A673 (cell line): ENCODE measurements at regions of chr9 and their contacts with region 1.

Region 1: DNA sequence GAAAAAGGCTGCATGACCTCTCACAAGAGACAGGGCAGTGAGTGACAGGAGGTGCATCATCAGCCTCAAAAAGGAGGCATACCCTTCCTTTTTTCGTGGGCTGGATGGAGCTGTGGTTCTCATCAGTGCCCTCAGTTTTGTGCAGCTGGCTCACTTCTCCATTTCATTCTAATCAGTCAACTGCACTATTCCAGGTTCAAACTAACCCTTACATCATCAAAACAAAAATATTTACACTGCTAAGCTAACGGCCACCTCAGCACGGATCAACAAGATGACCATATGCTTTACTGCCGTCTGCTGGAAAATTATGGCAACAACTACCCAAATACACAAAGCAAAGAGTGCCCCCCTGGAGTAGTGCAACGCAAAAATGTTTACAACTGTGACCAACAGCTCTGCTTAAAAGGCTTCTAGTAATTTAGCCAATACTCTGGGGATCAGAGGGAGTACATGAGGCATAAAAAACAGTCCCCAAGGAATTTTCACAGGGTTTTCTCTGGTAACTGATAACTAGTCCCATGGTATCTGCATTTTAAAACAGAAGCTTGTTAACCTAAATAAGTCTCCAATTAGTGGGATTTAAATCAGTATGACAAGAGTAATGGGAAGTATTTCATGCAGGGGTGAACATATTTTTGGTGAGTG is 10.8 kb downstream of the KCNV2 start:
- DNase-seq: peak; percentile 75
- H3K4me3 ChIP-seq: no peak overlapping the region
- H3K27ac ChIP-seq: no peak overlapping the region
- H3K4me1 ChIP-seq: peaks cover 6% of the 10 kb centered on the region
- H3K27me3 ChIP-seq: no peaks in the 10 kb centered on the region
- CTCF ChIP-seq: peak; percentile 75

Region 2: GRCh38 chr9:2132484-2133082 is 595.5 kb before region 1 on chr9:
- CTCF ChIA-PET with region 1: interaction called, 7 read pairs
- POLR2A ChIA-PET with region 1: no interaction called
- intact Hi-C with region 1: loop called (anchors 10 kb)
- DNase-seq: peak; percentile 68
- H3K4me3 ChIP-seq: no peak overlapping the region
- H3K27ac ChIP-seq: no peak overlapping the region
- H3K4me1 ChIP-seq: no peaks in the 10 kb centered on the region
- H3K27me3 ChIP-seq: no peaks in the 10 kb centered on the region
- CTCF ChIP-seq: peak; percentile 80

Region 3: GRCh38 chr9:2228132-2228531 is 500.0 kb before region 1 on chr9:
- CTCF ChIA-PET with region 1: no interaction called
- POLR2A ChIA-PET with region 1: no interaction called
- intact Hi-C with region 1: loop called (anchors 5 kb)
- DNase-seq: peak; percentile 62
- H3K4me3 ChIP-seq: no peak overlapping the region
- H3K27ac ChIP-seq: no peak overlapping the region
- H3K4me1 ChIP-seq: no peaks in the 10 kb centered on the region
- H3K27me3 ChIP-seq: no peaks in the 10 kb centered on the region
- CTCF ChIP-seq: peak; percentile 78

Region 4: GRCh38 chr9:2717385-2717784 is 10.7 kb before region 1 on chr9 and contains the start of gene KCNV2:
- CTCF ChIA-PET with region 1: no interaction called
- POLR2A ChIA-PET with region 1: no interaction called
- intact Hi-C with region 1: no loop called
- DNase-seq: no peak
- H3K4me3 ChIP-seq: no peak within 1 kb of the TSS
- H3K27ac ChIP-seq: no peak within 1 kb of the TSS
- H3K4me1 ChIP-seq: no peaks in the 10 kb centered on the region
- H3K27me3 ChIP-seq: no peaks in the 10 kb centered on the region
- CTCF ChIP-seq: no peak
- total RNA-seq, gene KCNV2: not detected in 2 replicates